PC-3 (cell line): ENCODE measurements at regions of chr2 and their contacts with region 1.

Region 1: GRCh38 chr2:174577967-174578589 is 19.5 kb downstream of the WIPF1 start:
- DNase-seq: peak; percentile 64
- ATAC-seq: peak; percentile 73
- H3K4me3 ChIP-seq: no peak overlapping the region
- H3K27ac ChIP-seq: no peak overlapping the region
- H3K4me1 ChIP-seq: no peaks in the 10 kb centered on the region
- H3K27me3 ChIP-seq: no peaks in the 10 kb centered on the region
- CTCF ChIP-seq: peak; percentile 79

Region 2: GRCh38 chr2:173914055-173914934 is 663.8 kb before region 1 on chr2:
- CTCF ChIA-PET with region 1: no interaction called
- POLR2A ChIA-PET with region 1: no interaction called
- intact Hi-C with region 1: no loop called
- DNase-seq: peak; percentile 69
- ATAC-seq: no peak
- H3K4me3 ChIP-seq: no peak overlapping the region
- H3K27ac ChIP-seq: no peak overlapping the region
- H3K4me1 ChIP-seq: peaks cover 20% of the 10 kb centered on the region
- H3K27me3 ChIP-seq: no peaks in the 10 kb centered on the region
- CTCF ChIP-seq: no peak

Region 3: DNA sequence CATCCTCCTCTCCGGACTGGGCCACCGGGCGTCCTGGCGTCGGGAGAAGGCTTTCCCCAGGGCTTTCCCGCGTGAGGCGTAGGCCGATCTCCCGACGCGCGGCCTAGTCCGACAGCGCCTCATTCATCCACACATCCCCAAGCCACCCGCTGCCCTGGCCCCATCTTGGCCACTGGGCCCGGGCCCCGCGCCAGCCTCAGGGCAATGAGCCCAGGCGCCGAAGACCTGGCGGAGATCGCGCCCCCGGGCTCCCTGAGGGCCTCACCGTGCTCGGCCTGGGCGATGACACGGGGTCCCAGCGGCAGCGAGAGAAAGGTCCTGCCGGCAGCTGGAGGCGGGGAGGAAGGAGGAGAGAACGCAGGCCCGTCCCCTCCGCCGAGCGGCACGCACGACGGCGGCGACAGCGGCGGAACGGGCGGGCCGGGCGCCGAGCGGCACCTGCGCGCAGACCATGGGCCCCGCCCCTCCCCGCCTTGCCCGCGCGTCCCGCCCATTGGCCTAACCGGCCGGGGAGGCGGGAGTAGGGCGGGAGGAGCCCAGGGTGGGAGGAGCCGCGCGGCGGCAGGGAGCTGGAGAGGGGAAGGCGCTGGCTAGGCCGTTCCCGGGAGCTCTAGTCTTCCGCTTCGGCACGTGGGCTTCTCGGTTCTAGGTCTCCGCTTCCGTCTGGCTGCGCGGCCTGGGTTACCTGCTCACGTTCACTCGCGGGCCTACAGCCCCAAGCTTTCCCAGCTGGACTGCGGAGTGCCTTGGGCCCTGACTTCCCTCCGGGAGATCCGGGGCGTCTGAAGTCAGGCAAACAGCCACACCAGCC is 329.7 kb before region 1 on chr2 and contains the start of gene OLA1:
- CTCF ChIA-PET with region 1: no interaction called
- POLR2A ChIA-PET with region 1: no interaction called
- intact Hi-C with region 1: no loop called
- DNase-seq: peak; percentile 96
- ATAC-seq: peak; percentile 95
- H3K4me3 ChIP-seq: peak within 1 kb of the TSS; percentile 90
- H3K27ac ChIP-seq: peak within 1 kb of the TSS; percentile 42
- H3K4me1 ChIP-seq: peaks cover 17% of the 10 kb centered on the region
- H3K27me3 ChIP-seq: no peaks in the 10 kb centered on the region
- CTCF ChIP-seq: no peak
- total RNA-seq, gene OLA1: 154 and 182 TPM in 2 replicates

Region 4: GRCh38 chr2:174603280-174603679 is 25.2 kb after region 1 on chr2:
- CTCF ChIA-PET with region 1: no interaction called
- POLR2A ChIA-PET with region 1: no interaction called
- intact Hi-C with region 1: loop called (anchors 1 kb)
- DNase-seq: peak; percentile 46
- ATAC-seq: peak; percentile 52
- H3K4me3 ChIP-seq: no peak overlapping the region
- H3K27ac ChIP-seq: no peak overlapping the region
- H3K4me1 ChIP-seq: peaks cover 15% of the 10 kb centered on the region
- H3K27me3 ChIP-seq: no peaks in the 10 kb centered on the region
- CTCF ChIP-seq: peak; percentile 75

Region 5: GRCh38 chr2:174621323-174621722 is 43.2 kb after region 1 on chr2:
- CTCF ChIA-PET with region 1: no interaction called
- POLR2A ChIA-PET with region 1: no interaction called
- intact Hi-C with region 1: no loop called
- DNase-seq: no peak
- ATAC-seq: no peak
- H3K4me3 ChIP-seq: no peak overlapping the region
- H3K27ac ChIP-seq: no peak overlapping the region
- H3K4me1 ChIP-seq: peaks cover 15% of the 10 kb centered on the region
- H3K27me3 ChIP-seq: 0 out of 2 replicates have a peak, but pooled peaks cover 6% of the 10 kb centered on the region
- CTCF ChIP-seq: no peak

Region 6: DNA sequence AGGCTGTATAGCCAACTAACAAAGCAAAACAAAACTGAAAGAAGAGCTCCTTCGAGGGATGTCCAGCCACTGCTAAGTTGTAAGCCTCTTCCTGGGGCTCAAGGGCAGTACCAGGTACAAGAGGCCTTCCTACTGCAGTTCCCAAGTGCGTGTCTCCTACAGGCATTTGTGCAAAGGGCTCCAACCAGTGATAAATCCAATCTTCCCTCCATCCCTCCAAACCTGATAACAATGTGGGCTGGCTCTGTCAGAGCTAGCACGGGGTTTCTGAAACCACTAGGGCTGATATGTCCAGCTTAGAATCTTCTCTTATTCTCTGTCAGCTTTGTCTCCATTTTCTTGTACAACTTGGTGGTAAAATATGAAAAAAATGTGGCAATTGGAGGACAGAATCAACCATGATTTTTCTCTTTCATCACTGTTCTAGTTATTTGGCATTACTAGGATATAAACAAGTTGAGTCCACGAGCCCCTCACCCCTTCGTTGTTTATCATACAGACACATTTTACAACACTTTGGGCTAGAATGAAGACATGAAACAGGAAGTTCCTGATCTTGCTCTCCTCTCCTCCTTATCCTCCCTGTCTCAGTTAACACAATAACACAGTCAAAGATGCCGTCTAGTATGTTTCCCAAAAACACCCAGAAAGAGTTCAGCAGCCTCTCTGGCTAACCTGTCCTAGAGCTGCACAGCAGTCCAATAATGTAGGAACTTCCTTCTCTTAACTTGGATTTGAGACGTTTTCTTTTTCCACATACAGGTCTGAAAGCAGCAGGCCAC is 55.0 kb after region 1 on chr2:
- CTCF ChIA-PET with region 1: no interaction called
- POLR2A ChIA-PET with region 1: interaction called, 21 read pairs
- intact Hi-C with region 1: no loop called
- DNase-seq: no peak
- ATAC-seq: no peak
- H3K4me3 ChIP-seq: no peak overlapping the region
- H3K27ac ChIP-seq: no peak overlapping the region
- H3K4me1 ChIP-seq: no peaks in the 10 kb centered on the region
- H3K27me3 ChIP-seq: no peaks in the 10 kb centered on the region
- CTCF ChIP-seq: no peak

Region 7: GRCh38 chr2:174688079-174688478 is 110.0 kb after region 1 on chr2:
- CTCF ChIA-PET with region 1: interaction called, 3 read pairs
- POLR2A ChIA-PET with region 1: interaction called, 3 read pairs
- intact Hi-C with region 1: loop called (anchors 1 kb)
- DNase-seq: peak; percentile 60
- ATAC-seq: peak; percentile 74
- H3K4me3 ChIP-seq: no peak overlapping the region
- H3K27ac ChIP-seq: no peak overlapping the region
- H3K4me1 ChIP-seq: no peaks in the 10 kb centered on the region
- H3K27me3 ChIP-seq: peaks cover 30% of the 10 kb centered on the region
- CTCF ChIP-seq: peak; percentile 69